Naive thymus-derived CD4-positive, alpha-beta T cell (primary cell): ENCODE measurements at regions of chr9 and their contacts with region 1.

Region 1: DNA sequence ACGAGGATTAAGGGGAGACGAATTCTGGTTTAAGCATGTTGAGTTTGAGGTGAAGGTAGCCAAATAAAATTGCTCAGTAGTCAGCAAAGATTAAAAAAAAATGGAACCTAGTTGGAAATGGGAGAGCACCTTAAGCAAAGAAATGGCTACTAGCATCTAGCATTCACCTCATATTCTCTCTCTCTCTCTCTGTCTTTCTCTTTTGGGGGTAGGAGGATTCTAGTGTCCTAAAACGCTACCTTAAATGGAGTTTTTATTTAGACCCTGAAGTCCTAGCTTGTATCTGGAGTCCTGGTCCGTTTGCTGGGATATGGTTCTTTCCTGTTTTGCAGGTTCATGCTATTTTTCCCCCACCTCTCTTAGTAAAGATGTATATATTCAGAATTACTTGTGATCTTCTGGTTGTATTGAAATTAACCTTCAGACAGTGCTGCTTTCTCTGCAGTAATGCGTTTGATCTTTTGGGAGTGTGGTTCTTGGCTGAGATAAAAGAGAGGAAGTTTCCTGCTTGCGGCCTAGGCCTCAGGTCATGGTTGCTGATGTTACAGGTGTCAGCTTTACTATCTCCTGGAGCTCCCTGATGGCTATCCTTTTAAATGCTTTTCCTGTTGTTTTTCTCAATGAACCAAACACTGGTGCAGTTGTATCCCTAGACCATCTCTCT is 8.0 kb downstream of the TGFBR1 start:
- DNase-seq: peak in 7 of 9 donors; percentile 73 to 88 (median 83)
- ATAC-seq: peak; percentile 97
- H3K4me3 ChIP-seq: peak overlapping the region; percentile 15
- H3K4me3 Mint-ChIP-seq: peak overlapping the region; percentile 62 to 83 (median 78)
- H3K27ac ChIP-seq: peak overlapping the region; percentile 34
- H3K27ac Mint-ChIP-seq: peak overlapping the region; percentile 65 to 90 (median 82)
- H3K4me1 ChIP-seq: peaks cover 81 to 82% of the 10 kb centered on the region in 2 donors
- H3K4me1 Mint-ChIP-seq: peaks cover 66 to 97% (median 93%) of the 10 kb centered on the region in 7 donors
- H3K27me3 ChIP-seq: no peaks in the 10 kb centered on the region
- H3K27me3 Mint-ChIP-seq: no peaks in the 10 kb centered on the region

Region 2: DNA sequence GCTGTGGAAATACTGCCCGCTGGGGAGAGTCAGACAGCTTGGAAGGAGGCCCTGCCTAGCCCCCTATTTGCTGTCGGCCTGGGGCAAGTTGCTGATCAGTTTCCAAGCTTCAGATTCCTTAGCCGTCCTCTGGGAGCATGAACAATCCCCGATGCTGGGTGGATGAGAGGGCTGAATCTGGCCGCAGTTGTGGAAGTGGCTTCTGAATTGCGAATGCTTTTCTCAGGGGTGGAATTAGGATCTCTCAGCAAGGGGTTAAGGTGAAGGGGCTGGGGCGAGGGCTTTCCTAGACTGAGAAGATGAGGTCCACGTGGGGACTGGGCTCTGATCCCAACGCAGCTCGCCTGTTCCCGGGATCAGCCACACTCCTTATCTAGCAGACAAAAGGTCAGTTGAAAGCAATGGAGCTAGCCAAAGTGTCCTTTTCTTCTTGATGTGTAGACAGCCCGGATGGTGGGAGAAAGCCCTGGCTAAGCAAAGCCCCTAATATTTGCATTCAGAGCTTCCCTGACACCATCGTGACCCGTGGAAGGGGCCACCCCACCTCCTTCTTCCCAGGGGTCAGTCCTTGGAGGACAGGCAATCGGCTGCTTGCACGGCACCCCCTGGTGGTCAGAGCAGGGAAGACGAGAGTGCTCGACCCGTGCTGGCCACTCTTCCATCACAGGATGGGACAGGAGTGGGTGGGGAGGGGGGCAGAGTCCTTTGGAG is 114.3 kb before region 1 on chr9:
- CTCF ChIA-PET with region 1: interaction called, 8 read pairs
- POLR2A ChIA-PET with region 1: no interaction called
- intact Hi-C with region 1: loop called in 1 of 2 experiments (anchors 2 kb)
- DNase-seq: peak in 8 of 9 donors; percentile 9 to 73 (median 29)
- ATAC-seq: peak; percentile 75
- H3K4me3 ChIP-seq: no peak overlapping the region
- H3K4me3 Mint-ChIP-seq: no peak overlapping the region
- H3K27ac ChIP-seq: no peak overlapping the region
- H3K27ac Mint-ChIP-seq: no peak overlapping the region
- H3K4me1 ChIP-seq: peaks cover 4 to 14% of the 10 kb centered on the region in 2 donors
- H3K4me1 Mint-ChIP-seq: peaks cover 17 to 45% (median 21%) of the 10 kb centered on the region in 7 donors
- H3K27me3 ChIP-seq: no peaks in the 10 kb centered on the region
- H3K27me3 Mint-ChIP-seq: peaks cover 0 to 32% (median 0%) of the 10 kb centered on the region in 5 donors

Region 3: DNA sequence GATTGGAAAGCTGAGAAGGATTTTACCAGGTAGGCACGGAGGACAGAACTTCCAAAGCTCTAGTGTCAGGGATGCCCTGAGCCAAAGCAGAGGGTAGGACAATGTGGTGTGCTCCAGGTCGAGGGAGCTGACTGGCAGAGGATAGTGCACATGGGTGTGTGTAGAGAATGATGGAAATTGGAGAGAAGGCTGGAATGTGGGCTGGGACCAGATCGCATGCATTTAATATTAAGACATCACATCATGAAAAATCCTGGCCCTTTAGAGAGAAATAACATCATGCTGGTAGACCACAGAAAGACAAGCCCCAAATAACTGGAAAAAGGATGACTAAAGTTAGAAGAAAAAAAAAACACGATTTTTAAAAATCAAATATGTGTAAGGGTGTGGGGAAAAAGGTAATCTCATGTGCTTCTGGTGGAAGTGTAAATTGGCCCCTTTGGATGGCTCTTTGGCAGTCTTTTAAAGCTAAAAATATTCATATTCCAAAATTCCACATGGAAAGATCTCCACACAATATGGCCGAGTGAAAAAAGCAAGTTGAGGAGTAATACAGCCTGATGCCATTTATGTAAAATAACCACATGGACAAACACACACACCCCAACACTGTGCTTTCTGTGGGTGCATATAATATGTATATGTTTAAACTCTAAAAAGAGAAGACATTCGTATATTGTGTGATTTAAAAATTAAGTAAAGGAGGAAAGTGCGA is 75.0 kb before region 1 on chr9:
- CTCF ChIA-PET with region 1: no interaction called
- POLR2A ChIA-PET with region 1: no interaction called
- intact Hi-C with region 1: no loop called
- DNase-seq: no peak
- ATAC-seq: no peak
- H3K4me3 ChIP-seq: no peak overlapping the region
- H3K4me3 Mint-ChIP-seq: no peak overlapping the region
- H3K27ac ChIP-seq: no peak overlapping the region
- H3K27ac Mint-ChIP-seq: peak overlapping the region in 1 of 9 donors; percentile 28
- H3K4me1 ChIP-seq: peaks cover 0 to 4% of the 10 kb centered on the region in 2 donors
- H3K4me1 Mint-ChIP-seq: peaks cover 16 to 58% (median 42%) of the 10 kb centered on the region in 7 donors
- H3K27me3 ChIP-seq: no peaks in the 10 kb centered on the region
- H3K27me3 Mint-ChIP-seq: peaks cover 0 to 5% (median 0%) of the 10 kb centered on the region in 5 donors

Region 4: GRCh38 chr9:99076483-99077171 is 36.3 kb before region 1 on chr9:
- CTCF ChIA-PET with region 1: interaction called, 3 read pairs
- POLR2A ChIA-PET with region 1: interaction called, 4 read pairs
- intact Hi-C with region 1: loop called in 1 of 2 experiments (anchors 2 kb)
- DNase-seq: peak in 7 of 9 donors; percentile 17 to 58 (median 42)
- ATAC-seq: peak; percentile 95
- H3K4me3 ChIP-seq: no peak overlapping the region
- H3K4me3 Mint-ChIP-seq: peak overlapping the region; percentile 1 to 79 (median 62)
- H3K27ac ChIP-seq: peak overlapping the region; percentile 18
- H3K27ac Mint-ChIP-seq: peak overlapping the region; percentile 53 to 93 (median 81)
- H3K4me1 ChIP-seq: peaks cover 17 to 26% of the 10 kb centered on the region in 2 donors
- H3K4me1 Mint-ChIP-seq: peaks cover 35 to 75% (median 60%) of the 10 kb centered on the region in 7 donors
- H3K27me3 ChIP-seq: no peaks in the 10 kb centered on the region
- H3K27me3 Mint-ChIP-seq: peaks cover 0 to 3% (median 0%) of the 10 kb centered on the region in 5 donors

Region 5: DNA sequence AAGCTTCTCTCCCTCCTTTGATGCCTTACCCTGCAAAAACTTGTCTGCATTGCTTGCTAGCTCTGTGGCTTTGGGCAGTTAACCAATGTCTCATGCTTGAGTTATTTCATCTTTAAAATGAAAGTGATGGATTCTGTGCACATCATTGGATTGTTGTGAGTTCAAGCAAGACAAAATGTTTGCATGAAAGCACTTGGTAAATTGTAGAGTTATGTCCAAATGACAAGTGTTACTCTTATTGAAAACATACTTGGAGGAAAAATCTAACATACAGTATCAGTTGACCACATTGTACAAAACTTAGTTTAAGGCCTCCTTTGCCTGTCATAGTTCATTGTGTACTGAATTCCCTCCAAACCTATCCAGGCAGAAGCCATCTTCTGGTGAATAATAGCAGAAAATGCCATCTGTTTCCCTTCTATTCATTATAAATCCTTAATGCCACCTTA is 22.0 kb after region 1 on chr9:
- CTCF ChIA-PET with region 1: interaction called, 13 read pairs
- POLR2A ChIA-PET with region 1: interaction called, 73 read pairs
- intact Hi-C with region 1: loop called (anchors 1 kb)
- DNase-seq: peak in 7 of 9 donors; percentile 32 to 54 (median 42)
- ATAC-seq: peak; percentile 67
- H3K4me3 ChIP-seq: peak overlapping the region; percentile 32
- H3K4me3 Mint-ChIP-seq: peak overlapping the region; percentile 61 to 82 (median 74)
- H3K27ac ChIP-seq: peak overlapping the region; percentile 50
- H3K27ac Mint-ChIP-seq: peak overlapping the region; percentile 72 to 96 (median 89)
- H3K4me1 ChIP-seq: peaks cover 21 to 53% of the 10 kb centered on the region in 2 donors
- H3K4me1 Mint-ChIP-seq: peaks cover 48 to 95% (median 90%) of the 10 kb centered on the region in 7 donors
- H3K27me3 ChIP-seq: no peaks in the 10 kb centered on the region
- H3K27me3 Mint-ChIP-seq: no peaks in the 10 kb centered on the region